ENCODE measurements at regions of chr7 and their contacts with region 1.

Region 1: GRCh38 chr7:123154231-123154860 is 45.4 kb downstream of the SLC13A1 start:
- DNase-seq: peak; percentile 86
- H3K4me3 ChIP-seq: no peak overlapping the region
- H3K27ac ChIP-seq: no peak overlapping the region
- H3K4me1 ChIP-seq: no peaks in the 10 kb centered on the region
- H3K27me3 ChIP-seq: no peaks in the 10 kb centered on the region
- CTCF ChIP-seq: peak; percentile 65 to 67
- POLR2A ChIP-seq: no peak

Region 2: DNA sequence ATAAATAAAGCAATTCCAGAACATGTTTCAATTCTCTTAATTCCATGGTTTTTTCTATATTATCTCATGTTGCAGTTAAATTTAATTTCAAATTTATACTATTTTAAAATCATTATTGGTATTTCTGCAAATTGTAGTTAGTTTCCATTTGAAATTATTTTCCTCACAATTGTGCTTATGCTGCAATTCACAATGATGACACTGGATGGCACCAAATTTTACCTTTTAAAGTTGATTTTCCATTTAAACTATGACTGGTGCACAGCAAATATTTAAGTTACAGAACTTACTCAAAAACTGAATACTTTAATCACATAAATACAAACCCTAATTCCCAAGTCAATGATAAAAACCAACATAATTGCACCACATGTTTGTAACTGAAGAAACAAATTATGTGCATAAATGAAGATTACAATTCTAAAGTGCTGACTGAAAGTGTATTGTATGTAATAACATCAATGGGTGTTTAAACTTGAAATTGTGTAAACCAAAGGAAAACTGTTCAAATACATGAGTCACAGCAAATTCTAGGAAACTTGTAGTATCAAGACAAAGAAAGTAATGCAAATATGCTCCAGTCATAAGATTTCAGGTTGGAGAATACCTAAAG is 935.0 kb before region 1 on chr7:
- CTCF ChIA-PET with region 1: interaction called, 6 read pairs
- POLR2A ChIA-PET with region 1: no interaction called
- dilution Hi-C with region 1: no loop called
- intact Hi-C with region 1: loop called (anchors 5 kb)
- DNase-seq: peak; percentile 56
- H3K4me3 ChIP-seq: no peak overlapping the region
- H3K27ac ChIP-seq: no peak overlapping the region
- H3K4me1 ChIP-seq: no peaks in the 10 kb centered on the region
- H3K27me3 ChIP-seq: no peaks in the 10 kb centered on the region
- CTCF ChIP-seq: peak; percentile 30 to 33
- POLR2A ChIP-seq: no peak

Region 3: DNA sequence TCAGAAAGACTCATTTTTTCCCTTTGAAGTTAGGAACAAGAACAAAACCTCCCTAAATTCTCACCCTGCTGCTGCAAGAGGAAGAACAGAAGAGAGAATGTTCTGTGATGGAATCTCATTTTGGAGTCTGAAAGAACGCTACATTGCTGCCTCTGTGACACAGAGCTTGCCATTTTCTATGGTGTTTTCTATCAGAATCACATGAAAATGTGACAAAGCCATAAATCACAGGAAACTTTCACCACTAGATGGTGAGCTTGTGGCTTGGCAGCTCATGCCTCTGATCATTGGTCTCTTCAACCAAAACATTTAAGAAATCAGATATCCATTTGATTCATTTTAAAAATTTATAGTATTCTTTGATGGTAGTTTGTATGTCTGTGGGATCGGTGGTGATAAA is 351.0 kb before region 1 on chr7:
- CTCF ChIA-PET with region 1: interaction called, 52 read pairs
- POLR2A ChIA-PET with region 1: no interaction called
- dilution Hi-C with region 1: no loop called
- intact Hi-C with region 1: loop called (anchors 1 kb)
- DNase-seq: peak; percentile 74
- H3K4me3 ChIP-seq: no peak overlapping the region
- H3K27ac ChIP-seq: peak overlapping the region; percentile 46
- H3K4me1 ChIP-seq: peaks cover 16% of the 10 kb centered on the region
- H3K27me3 ChIP-seq: no peaks in the 10 kb centered on the region
- CTCF ChIP-seq: peak; percentile 35
- POLR2A ChIP-seq: no peak

Region 4: DNA sequence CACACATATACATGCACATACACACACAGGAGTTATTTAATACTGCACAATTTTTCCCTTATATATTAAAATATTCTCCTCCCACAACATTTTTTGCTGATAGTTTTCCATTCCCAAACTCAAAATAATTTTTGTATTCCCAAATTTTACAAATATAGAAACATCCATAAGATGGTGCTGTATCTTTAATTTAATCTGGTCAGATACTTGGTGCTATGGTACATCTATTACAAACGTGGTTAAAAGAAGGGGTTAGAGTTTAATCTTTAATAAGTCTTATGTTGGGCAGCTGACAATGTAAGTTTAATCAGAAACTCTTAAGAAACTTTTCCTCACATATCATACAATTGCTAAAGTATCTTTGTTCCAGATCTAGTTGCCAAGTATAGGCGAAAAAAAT is 257.8 kb before region 1 on chr7:
- CTCF ChIA-PET with region 1: interaction called, 24 read pairs
- POLR2A ChIA-PET with region 1: no interaction called
- dilution Hi-C with region 1: no loop called
- intact Hi-C with region 1: loop called (anchors 1 kb)
- DNase-seq: no peak
- H3K4me3 ChIP-seq: no peak overlapping the region
- H3K27ac ChIP-seq: no peak overlapping the region
- H3K4me1 ChIP-seq: no peaks in the 10 kb centered on the region
- H3K27me3 ChIP-seq: no peaks in the 10 kb centered on the region
- CTCF ChIP-seq: no peak
- POLR2A ChIP-seq: no peak

Region 5: GRCh38 chr7:123143252-123144006 is 10.9 kb before region 1 on chr7:
- CTCF ChIA-PET with region 1: interaction called, 10 read pairs
- POLR2A ChIA-PET with region 1: no interaction called
- dilution Hi-C with region 1: no loop called
- intact Hi-C with region 1: no loop called
- DNase-seq: no peak
- H3K4me3 ChIP-seq: no peak overlapping the region
- H3K27ac ChIP-seq: no peak overlapping the region
- H3K4me1 ChIP-seq: no peaks in the 10 kb centered on the region
- H3K27me3 ChIP-seq: no peaks in the 10 kb centered on the region
- CTCF ChIP-seq: no peak
- POLR2A ChIP-seq: no peak

Region 6: DNA sequence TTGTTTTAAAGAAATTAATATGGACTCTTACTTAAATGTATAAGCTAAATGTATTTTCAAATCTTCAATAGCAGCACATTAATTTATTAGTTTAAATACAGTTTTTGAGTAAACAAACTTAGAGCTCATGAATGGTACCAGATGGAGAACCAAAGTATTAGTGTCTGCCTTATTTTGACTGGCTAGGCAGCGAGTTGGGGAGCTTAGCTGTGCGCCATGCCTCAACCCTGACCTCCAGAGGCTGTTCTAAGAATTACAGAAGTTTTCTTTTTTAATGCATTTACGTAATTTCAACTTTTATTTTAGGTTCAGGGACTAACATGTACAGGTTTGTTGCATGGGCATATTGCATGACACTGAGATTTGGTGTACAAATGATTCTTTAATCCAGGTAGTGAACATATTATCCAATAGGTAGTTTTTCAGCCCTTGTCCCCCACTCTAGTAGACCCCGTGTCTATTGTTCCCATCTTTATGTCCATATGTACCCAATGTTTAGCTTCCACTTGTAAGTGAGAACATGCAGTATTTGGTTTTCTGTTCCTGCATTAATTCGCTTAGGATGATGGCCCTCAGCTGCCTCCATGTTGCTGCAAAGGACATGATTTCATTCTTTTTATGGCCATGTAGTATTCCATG is 213.3 kb after region 1 on chr7:
- CTCF ChIA-PET with region 1: interaction called, 28 read pairs
- POLR2A ChIA-PET with region 1: no interaction called
- dilution Hi-C with region 1: no loop called
- intact Hi-C with region 1: no loop called
- DNase-seq: peak; percentile 57
- H3K4me3 ChIP-seq: no peak overlapping the region
- H3K27ac ChIP-seq: no peak overlapping the region
- H3K4me1 ChIP-seq: no peaks in the 10 kb centered on the region
- H3K27me3 ChIP-seq: no peaks in the 10 kb centered on the region
- CTCF ChIP-seq: peak; percentile 54 to 62
- POLR2A ChIP-seq: no peak